HepG2 (cell line): ENCODE measurements at regions of chrX and their contacts with region 1.

Region 1: GRCh38 chrX:17046478-17047097 is 100.1 kb downstream of the REPS2 start:
- DNase-seq: peak; percentile 41
- ATAC-seq: peak; percentile 82
- H3K4me3 ChIP-seq: no peak overlapping the region
- H3K27ac ChIP-seq: no peak overlapping the region
- H3K4me1 ChIP-seq: no peaks in the 10 kb centered on the region
- H3K27me3 ChIP-seq: no peaks in the 10 kb centered on the region
- CTCF ChIP-seq: peak; percentile 84
- EP300 ChIP-seq: no peak
- POLR2A ChIP-seq: no peak
- RAD21 ChIP-seq: peak; percentile 62

Region 2: GRCh38 chrX:16552546-16552945 is 494.0 kb before region 1 on chrX:
- CTCF ChIA-PET with region 1: no interaction called
- POLR2A ChIA-PET with region 1: no interaction called
- in situ Hi-C with region 1: no loop called
- intact Hi-C with region 1: no loop called
- DNase-seq: no peak
- ATAC-seq: no peak
- H3K4me3 ChIP-seq: no peak overlapping the region
- H3K27ac ChIP-seq: no peak overlapping the region
- H3K4me1 ChIP-seq: no peaks in the 10 kb centered on the region
- H3K27me3 ChIP-seq: no peaks in the 10 kb centered on the region
- CTCF ChIP-seq: no peak
- EP300 ChIP-seq: no peak
- POLR2A ChIP-seq: no peak
- RAD21 ChIP-seq: no peak

Region 3: DNA sequence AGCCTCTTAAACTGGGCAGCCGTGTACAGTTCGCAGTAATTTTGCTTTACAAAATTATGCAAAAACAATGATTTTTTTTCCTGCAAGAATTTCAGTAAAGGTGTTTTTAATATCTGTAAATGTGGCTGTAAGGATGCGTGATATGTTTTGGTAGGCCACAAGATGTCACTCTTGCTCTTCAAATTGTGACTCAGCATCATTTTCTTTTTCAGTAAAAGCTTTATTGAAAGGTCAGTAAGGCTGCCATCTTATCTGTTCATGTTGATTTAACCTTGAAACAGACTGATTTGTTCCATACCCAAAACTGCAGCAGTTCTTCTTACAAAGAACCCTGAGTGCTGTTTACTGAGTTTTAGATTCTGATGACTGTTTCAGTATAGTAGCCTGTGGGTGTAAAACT is 220.4 kb before region 1 on chrX:
- CTCF ChIA-PET with region 1: interaction called, 7 read pairs
- POLR2A ChIA-PET with region 1: no interaction called
- in situ Hi-C with region 1: loop called (anchors 10 kb)
- intact Hi-C with region 1: loop called (anchors 1 kb)
- DNase-seq: peak; percentile 78
- ATAC-seq: peak; percentile 81
- H3K4me3 ChIP-seq: no peak overlapping the region
- H3K27ac ChIP-seq: peak overlapping the region; percentile 52
- H3K4me1 ChIP-seq: peaks cover 20% of the 10 kb centered on the region
- H3K27me3 ChIP-seq: no peaks in the 10 kb centered on the region
- CTCF ChIP-seq: peak; percentile 69
- EP300 ChIP-seq: no peak
- POLR2A ChIP-seq: no peak
- RAD21 ChIP-seq: no peak

Region 4: GRCh38 chrX:16882702-16883486 is 163.7 kb before region 1 on chrX:
- CTCF ChIA-PET with region 1: interaction called, 12 read pairs
- POLR2A ChIA-PET with region 1: no interaction called
- in situ Hi-C with region 1: no loop called
- intact Hi-C with region 1: loop called (anchors 1 kb)
- DNase-seq: peak; percentile 44
- ATAC-seq: peak; percentile 95
- H3K4me3 ChIP-seq: peak overlapping the region; percentile 55 to 70 (median 55); a peak in 5 of 6 replicates
- H3K27ac ChIP-seq: no peak overlapping the region
- H3K4me1 ChIP-seq: no peaks in the 10 kb centered on the region
- H3K27me3 ChIP-seq: no peaks in the 10 kb centered on the region
- CTCF ChIP-seq: peak; percentile 61
- EP300 ChIP-seq: no peak
- POLR2A ChIP-seq: no peak
- RAD21 ChIP-seq: no peak

Region 5: GRCh38 chrX:16946361-16946964 is 100.1 kb before region 1 on chrX and contains the start of gene REPS2:
- CTCF ChIA-PET with region 1: no interaction called
- POLR2A ChIA-PET with region 1: no interaction called
- in situ Hi-C with region 1: no loop called
- intact Hi-C with region 1: loop called (anchors 1 kb)
- DNase-seq: peak; percentile 41
- ATAC-seq: peak; percentile 98
- H3K4me3 ChIP-seq: peak within 1 kb of the TSS; percentile 47 to 66 (median 55)
- H3K27ac ChIP-seq: no peak within 1 kb of the TSS
- H3K4me1 ChIP-seq: peaks cover 5% of the 10 kb centered on the region; the same call in 1 of the 2 replicates
- H3K27me3 ChIP-seq: 0 out of 5 replicates have a peak, but pooled peaks cover 0 to 4% of the 10 kb centered on the region in 2 experiments
- CTCF ChIP-seq: no peak
- EP300 ChIP-seq: no peak
- POLR2A ChIP-seq: no peak
- RAD21 ChIP-seq: no peak
- total RNA-seq, gene REPS2: 0.58 and 0.84 TPM in 2 replicates

Region 6: GRCh38 chrX:17007206-17007683 is 39.3 kb before region 1 on chrX:
- CTCF ChIA-PET with region 1: interaction called, 3 read pairs
- POLR2A ChIA-PET with region 1: no interaction called
- in situ Hi-C with region 1: no loop called
- intact Hi-C with region 1: loop called (anchors 5 kb)
- DNase-seq: peak; percentile 4
- ATAC-seq: peak; percentile 62
- H3K4me3 ChIP-seq: no peak overlapping the region
- H3K27ac ChIP-seq: no peak overlapping the region
- H3K4me1 ChIP-seq: no peaks in the 10 kb centered on the region
- H3K27me3 ChIP-seq: no peaks in the 10 kb centered on the region
- CTCF ChIP-seq: peak; percentile 54
- EP300 ChIP-seq: no peak
- POLR2A ChIP-seq: no peak
- RAD21 ChIP-seq: no peak